ENCODE measurements at regions of chr20 and their contacts with region 1.

Region 1: DNA sequence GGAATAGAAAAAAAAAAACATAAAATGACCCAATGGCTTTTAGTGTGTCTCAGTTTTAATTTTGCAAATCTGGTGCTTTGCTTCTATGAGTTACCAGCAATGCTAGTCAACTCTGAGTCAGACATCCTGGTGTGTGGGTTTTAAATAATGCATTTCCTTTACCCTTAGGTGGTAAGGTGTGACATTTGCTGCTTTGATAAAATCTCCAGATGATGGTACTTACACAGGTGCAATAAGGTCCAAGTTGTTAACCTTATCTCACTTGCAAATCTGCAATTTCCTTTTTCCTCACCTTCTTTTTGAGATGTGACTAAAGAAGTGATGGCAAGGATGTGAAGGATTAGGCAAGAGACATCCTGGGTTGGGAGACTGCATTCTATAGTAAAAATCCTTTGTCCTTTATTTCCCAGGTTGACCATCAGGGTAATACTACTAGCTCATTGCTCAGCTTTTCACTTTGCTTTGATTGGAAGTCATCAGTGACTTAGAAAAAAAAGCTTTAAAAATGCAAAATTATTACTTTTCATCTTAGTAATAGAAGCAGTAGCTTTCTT is 818.5 kb upstream of the FLRT3 start:
- DNase-seq: no peak

Region 2: DNA sequence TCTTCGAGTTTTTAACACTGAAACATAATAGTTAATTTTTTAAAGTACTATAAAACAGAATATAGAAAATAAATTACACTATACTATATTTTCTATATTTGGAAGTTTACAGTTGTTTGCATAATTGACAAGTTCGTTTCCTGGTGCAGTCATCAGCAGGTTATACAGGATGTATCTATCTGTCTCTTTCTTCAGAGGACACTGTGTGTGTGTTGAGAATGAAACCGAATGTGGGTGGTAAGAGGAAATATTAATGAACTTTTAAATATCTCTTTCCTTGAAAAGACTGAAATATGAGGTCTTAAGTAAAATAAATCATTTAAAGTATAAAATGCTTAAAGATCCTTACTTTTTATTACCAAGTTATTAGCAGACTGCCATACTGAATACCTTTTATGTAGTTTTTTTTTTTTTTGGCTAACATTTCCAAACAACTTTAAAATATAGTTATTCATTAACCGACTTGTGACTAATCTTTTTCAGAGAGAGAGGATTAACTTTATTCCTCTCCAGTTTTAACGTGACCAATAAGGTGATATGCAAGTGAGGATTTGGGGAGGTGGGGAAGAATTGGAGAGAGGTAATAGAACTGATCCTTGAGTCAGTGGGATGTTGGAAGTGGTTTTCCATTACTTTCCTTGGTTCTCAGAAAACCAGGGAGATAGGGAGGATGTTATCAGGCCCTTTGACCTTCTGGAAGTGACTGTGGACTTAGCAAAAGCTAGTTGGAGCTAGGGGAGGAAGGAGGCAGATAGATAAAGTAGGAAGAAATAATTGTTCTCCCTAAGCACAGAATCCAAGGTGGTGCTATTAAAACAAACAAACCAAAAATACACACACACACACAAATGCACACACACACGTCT is 438.6 kb before region 1 on chr20:
- intact Hi-C with region 1: no loop called
- DNase-seq: no peak

Region 3: DNA sequence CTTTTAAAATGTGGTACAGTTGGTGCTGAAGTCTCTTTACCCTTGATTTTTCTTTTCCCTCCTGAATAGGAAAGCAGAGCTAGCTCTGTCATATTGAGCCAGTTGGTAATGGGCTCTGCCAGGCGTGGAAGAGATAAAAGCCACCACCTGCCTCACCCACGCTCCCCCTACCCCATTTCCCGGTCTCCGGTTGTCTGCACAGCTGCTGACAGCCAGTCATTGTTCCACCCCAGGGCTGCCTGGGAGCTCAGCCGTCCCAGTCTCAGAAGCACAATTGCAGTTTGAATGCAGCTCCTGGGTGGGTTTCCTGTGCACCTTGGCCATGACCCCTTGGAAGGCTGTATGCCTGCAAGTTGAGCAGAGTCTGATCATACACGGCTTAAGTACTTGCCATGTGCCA is 143.4 kb before region 1 on chr20:
- intact Hi-C with region 1: no loop called
- DNase-seq: no peak

Region 4: DNA sequence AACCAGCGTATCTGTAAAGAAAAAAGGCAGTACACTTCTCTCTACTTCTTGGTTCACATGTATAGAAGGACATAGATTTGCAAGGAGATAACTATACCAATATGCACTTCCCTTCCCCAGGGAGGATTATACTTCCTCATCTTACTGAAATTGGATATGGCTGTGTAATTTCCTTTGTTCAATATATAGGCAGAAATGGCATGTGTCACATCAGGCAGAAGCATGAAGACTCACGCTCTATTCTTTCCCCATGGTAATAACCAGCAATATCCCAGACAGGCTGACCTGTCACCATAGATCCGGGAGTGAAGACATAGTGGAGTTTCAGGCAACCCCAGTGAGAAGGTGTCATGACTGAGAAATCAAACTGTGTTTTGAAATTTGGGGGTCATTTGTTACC is 899.1 kb after region 1 on chr20:
- intact Hi-C with region 1: loop called in 1 of 2 experiments (anchors 5 kb)
- DNase-seq: no peak

Region 5: DNA sequence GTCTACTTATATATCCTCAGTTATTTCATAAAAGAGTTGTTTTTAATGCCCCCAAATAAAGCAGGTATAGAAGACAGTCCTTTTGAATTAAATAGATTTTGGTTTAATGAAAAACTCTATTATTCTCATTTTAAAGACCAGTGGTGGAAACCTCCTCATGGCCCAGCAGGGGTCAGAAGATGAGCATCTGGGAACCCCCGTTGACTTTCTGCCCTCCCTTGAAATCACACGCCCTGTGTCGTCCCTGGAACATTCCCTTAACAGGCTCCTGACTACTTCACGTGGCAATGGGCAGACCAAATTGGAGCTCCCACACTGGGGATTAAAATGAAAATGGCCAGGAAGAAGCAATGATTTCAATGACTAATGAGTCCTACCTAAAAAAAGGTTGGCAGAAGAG is 1196.4 kb after region 1 on chr20:
- intact Hi-C with region 1: no loop called
- DNase-seq: no peak